HepG2 (cell line): ENCODE measurements at regions of chr4 and their contacts with region 1.

Region 1: GRCh38 chr4:41133454-41134018 is 80.8 kb downstream of the APBB2 start:
- DNase-seq: no peak
- ATAC-seq: no peak
- H3K4me3 ChIP-seq: no peak overlapping the region
- H3K27ac ChIP-seq: no peak overlapping the region
- H3K4me1 ChIP-seq: peaks cover 74% of the 10 kb centered on the region
- H3K27me3 ChIP-seq: no peaks in the 10 kb centered on the region
- CTCF ChIP-seq: no peak
- EP300 ChIP-seq: no peak
- POLR2A ChIP-seq: no peak
- RAD21 ChIP-seq: no peak

Region 2: DNA sequence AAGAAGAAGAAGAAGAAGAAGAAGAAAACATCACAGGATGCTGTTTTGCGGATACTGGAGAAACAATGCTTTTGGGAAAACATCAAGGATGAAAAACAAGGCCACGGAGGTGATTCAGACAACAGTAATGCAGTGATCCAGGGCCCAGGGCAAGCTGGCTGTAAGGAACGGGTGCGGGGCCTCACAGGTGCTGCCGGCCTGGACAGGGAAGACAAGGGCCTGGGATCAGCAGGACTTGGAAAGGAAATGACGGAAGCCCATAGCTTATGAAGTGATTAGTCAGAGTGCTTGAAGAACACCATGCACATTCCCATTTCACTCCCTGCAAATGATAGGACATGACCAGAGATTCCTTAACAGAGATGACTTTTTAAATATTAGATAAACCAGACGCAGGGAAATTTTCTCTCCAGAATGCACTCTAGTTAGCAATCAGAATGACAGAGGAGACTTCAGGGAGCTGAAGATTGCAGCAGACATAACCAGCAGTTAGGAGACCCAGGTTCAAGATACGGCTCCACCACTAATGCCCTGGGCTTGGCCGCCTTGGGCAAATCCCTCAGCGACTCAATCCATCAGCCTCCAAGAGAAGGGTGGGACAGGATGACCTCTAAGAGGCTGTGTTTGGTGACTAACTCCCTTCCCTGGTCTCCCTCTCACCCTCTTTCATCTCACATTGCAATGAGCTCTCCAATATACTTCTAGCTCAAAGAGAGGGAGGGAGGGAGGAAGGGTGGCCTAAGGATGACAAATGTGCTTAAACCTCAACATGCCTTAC is 26.7 kb after region 1 on chr4:
- CTCF ChIA-PET with region 1: no interaction called
- POLR2A ChIA-PET with region 1: interaction called, 4 read pairs
- in situ Hi-C with region 1: no loop called
- intact Hi-C with region 1: loop called (anchors 2 kb)
- DNase-seq: no peak
- ATAC-seq: no peak
- H3K4me3 ChIP-seq: no peak overlapping the region
- H3K27ac ChIP-seq: peak overlapping the region; percentile 14
- H3K4me1 ChIP-seq: peaks cover 100% of the 10 kb centered on the region
- H3K27me3 ChIP-seq: no peaks in the 10 kb centered on the region
- CTCF ChIP-seq: no peak
- EP300 ChIP-seq: no peak
- POLR2A ChIP-seq: no peak
- RAD21 ChIP-seq: no peak

Region 3: GRCh38 chr4:41204400-41204978 is 71.0 kb after region 1 on chr4:
- CTCF ChIA-PET with region 1: no interaction called
- POLR2A ChIA-PET with region 1: no interaction called
- in situ Hi-C with region 1: no loop called
- intact Hi-C with region 1: no loop called
- DNase-seq: peak; percentile 30
- ATAC-seq: peak; percentile 49
- H3K4me3 ChIP-seq: no peak overlapping the region
- H3K27ac ChIP-seq: no peak overlapping the region
- H3K4me1 ChIP-seq: peaks cover 44% of the 10 kb centered on the region
- H3K27me3 ChIP-seq: no peaks in the 10 kb centered on the region; a peak in 1 of 5 replicates
- CTCF ChIP-seq: no peak
- EP300 ChIP-seq: no peak
- POLR2A ChIP-seq: no peak
- RAD21 ChIP-seq: no peak